Activated CD8-positive, alpha-beta memory T cell treated with anti-CD3 and anti-CD28 coated beads, Interleukin-2, amount 10 ng/mL, durations not matched to agents 7 days and 5 days (primary cell): ENCODE measurements at regions of chr12 and their contacts with region 1.

Region 1: DNA sequence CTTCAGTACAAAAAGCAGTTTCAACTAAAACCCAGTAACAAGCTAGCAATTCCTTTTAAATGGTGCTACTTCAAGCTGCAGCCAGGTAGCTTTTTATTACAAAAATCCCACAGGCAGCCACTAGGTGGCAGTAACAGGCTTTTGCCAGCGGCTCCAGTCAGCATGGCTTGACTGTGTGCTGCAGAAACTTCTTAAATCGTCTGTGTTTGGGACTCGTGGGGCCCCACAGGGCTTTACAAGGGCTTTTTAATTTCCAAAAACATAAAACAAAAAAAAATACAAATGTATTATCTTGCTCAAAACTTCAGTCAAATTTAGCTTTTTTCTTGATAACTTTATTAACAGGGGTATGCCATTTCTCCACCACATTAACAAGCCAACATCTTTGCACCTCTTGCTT is 3.6 kb upstream of the CLEC4E start:
- DNase-seq: peak; percentile 74
- ATAC-seq: peak; percentile 71
- H3K4me3 Mint-ChIP-seq: no peak overlapping the region
- H3K27ac Mint-ChIP-seq: no peak overlapping the region
- H3K4me1 Mint-ChIP-seq: peaks cover 4% of the 10 kb centered on the region
- H3K27me3 Mint-ChIP-seq: peaks cover 57% of the 10 kb centered on the region

Region 2: DNA sequence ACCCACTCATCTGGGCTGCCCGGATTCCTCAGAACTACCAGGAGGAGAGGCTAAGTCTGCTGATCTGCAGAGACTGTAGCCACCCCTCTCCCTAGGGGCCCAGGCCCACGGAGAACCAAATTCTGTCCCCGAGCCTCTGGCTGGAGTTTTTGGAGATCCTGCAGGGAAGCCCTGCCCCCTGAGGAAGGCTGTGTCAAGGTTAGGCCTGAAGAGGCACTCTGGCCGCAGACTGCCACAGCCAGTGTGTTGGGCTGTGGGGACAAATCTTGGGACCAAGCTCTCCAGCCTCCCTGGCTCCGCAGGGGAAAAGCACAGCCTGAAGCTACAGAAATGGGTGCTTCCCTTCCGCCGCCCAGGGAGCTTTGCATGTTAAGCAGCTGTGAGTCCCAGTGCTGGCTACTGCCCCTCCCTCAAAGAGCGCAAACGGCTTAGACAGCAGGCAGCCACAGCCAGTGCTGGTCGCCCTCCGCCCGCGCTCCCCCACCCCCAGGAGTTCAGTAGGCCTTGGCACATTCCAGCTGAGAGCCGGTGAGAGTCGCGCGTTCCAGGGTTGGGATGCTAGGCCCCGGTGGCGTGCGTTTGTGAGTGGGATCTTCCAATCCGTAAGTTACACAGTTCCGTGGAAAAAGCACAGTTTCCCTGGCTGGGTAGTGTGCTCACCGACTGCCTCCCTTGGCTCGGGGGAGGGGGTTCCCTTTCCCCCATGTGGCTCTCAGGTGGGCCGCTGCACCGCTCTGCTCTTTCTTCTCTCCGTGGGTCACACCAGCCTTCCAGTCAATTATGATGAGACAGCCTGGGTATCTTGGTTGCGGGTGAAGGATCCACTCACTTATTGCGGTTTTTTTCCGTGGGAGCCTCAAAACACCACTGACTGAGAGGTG is 16.8 kb before region 1 on chr12:
- CTCF ChIA-PET with region 1: interaction called, 12 read pairs
- DNase-seq: no peak
- ATAC-seq: no peak
- H3K4me3 Mint-ChIP-seq: no peak overlapping the region
- H3K27ac Mint-ChIP-seq: no peak overlapping the region
- H3K4me1 Mint-ChIP-seq: no peaks in the 10 kb centered on the region
- H3K27me3 Mint-ChIP-seq: peaks cover 53% of the 10 kb centered on the region

Region 3: GRCh38 chr12:8590842-8591550 is 46.7 kb after region 1 on chr12:
- CTCF ChIA-PET with region 1: interaction called, 12 read pairs
- DNase-seq: no peak
- ATAC-seq: no peak
- H3K4me3 Mint-ChIP-seq: no peak overlapping the region
- H3K27ac Mint-ChIP-seq: no peak overlapping the region
- H3K4me1 Mint-ChIP-seq: peaks cover 8% of the 10 kb centered on the region
- H3K27me3 Mint-ChIP-seq: peaks cover 7% of the 10 kb centered on the region

Region 4: GRCh38 chr12:8637666-8638065 is 93.4 kb after region 1 on chr12:
- CTCF ChIA-PET with region 1: no interaction called
- DNase-seq: no peak
- ATAC-seq: no peak
- H3K4me3 Mint-ChIP-seq: no peak overlapping the region
- H3K27ac Mint-ChIP-seq: no peak overlapping the region
- H3K4me1 Mint-ChIP-seq: no peaks in the 10 kb centered on the region
- H3K27me3 Mint-ChIP-seq: peaks cover 75% of the 10 kb centered on the region

Region 5: GRCh38 chr12:8860165-8860961 is 316.1 kb after region 1 on chr12:
- CTCF ChIA-PET with region 1: interaction called, 12 read pairs
- DNase-seq: no peak
- ATAC-seq: no peak
- H3K4me3 Mint-ChIP-seq: no peak overlapping the region
- H3K27ac Mint-ChIP-seq: no peak overlapping the region
- H3K4me1 Mint-ChIP-seq: no peaks in the 10 kb centered on the region
- H3K27me3 Mint-ChIP-seq: peaks cover 12% of the 10 kb centered on the region

Region 6: DNA sequence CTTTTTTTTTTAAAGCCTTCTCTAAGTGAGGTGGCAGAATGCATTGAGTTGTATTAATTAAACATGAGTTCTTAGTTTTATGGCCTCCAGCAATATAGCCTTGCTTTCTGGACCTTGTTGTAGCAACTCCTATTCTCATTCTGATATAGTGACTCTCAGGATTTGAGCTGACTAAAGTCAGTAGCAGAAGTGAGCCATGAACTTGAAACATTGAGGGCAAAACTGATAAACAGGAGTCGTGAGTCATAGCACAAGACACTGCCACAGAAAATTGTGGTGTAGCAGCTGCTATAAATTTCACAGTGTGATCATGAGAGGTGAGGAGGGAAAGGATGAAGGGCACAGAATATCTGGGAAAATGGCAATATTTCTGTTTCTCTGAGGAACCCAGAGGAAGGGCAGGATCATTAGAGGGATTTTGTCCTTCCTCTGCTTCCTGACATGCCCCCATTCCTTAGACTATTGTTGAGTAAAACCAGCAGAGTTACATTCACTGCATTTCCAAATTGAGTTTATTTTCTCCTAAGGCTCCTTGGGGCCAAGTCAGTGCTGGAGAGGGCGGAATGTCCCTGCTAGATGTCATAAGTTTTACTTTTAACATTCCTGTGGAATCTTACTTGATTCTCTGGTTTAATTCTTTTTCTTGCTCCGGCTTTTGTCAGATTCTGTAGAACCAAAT is 452.5 kb after region 1 on chr12:
- CTCF ChIA-PET with region 1: no interaction called
- DNase-seq: peak; percentile 50
- ATAC-seq: peak; percentile 86
- H3K4me3 Mint-ChIP-seq: no peak overlapping the region
- H3K27ac Mint-ChIP-seq: no peak overlapping the region
- H3K4me1 Mint-ChIP-seq: peaks cover 23% of the 10 kb centered on the region
- H3K27me3 Mint-ChIP-seq: peaks cover 6% of the 10 kb centered on the region

Region 7: DNA sequence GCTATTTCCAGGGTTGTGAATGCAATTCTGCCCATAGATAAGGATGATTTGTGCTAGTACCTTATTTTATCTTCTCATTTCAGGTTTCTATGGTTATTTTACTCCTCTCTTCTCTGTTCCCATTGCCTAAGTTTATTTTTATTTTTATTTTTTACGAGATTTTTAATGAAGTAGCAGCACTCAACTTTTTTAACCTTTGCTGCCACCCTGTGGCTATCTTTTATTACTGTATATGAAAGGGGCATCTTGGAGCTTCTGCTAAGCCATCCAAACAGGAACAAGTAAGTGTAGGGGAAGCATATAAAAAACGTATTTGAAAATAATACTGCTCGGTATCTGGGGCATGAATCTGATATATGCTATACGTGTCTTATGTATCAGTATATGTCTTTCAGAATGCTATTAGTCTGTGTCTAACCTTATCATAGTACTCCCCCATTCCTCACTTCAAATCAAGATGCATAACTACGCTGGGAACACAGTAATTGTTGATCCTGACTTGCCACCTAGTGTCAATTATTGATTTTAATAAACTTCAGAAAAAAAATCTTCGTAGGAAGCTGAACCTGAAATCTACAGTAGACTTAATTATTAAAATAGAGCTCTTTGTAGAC is 505.3 kb after region 1 on chr12:
- CTCF ChIA-PET with region 1: interaction called, 16 read pairs
- DNase-seq: no peak
- ATAC-seq: peak; percentile 76
- H3K4me3 Mint-ChIP-seq: no peak overlapping the region
- H3K27ac Mint-ChIP-seq: no peak overlapping the region
- H3K4me1 Mint-ChIP-seq: peaks cover 7% of the 10 kb centered on the region
- H3K27me3 Mint-ChIP-seq: peaks cover 4% of the 10 kb centered on the region